Activated CD4-positive, alpha-beta T cell treated with anti-CD3 and anti-CD28 coated beads, Interleukin-2, amount 10 ng/mL, durations not matched to agents 24 days and 14 days (primary cell): ENCODE measurements at regions of chr9 and their contacts with region 1.

Region 1: GRCh38 chr9:123187131-123187530 is 81.3 kb downstream of the STRBP start:
- DNase-seq: no peak
- H3K4me3 Mint-ChIP-seq: no peak overlapping the region
- H3K27ac Mint-ChIP-seq: no peak overlapping the region
- H3K4me1 Mint-ChIP-seq: no peaks in the 10 kb centered on the region
- H3K27me3 Mint-ChIP-seq: no peaks in the 10 kb centered on the region

Region 2: GRCh38 chr9:123150708-123151503 is 36.2 kb before region 1 on chr9:
- intact Hi-C with region 1: loop called (anchors 1 kb)
- DNase-seq: no peak
- H3K4me3 Mint-ChIP-seq: no peak overlapping the region
- H3K27ac Mint-ChIP-seq: no peak overlapping the region
- H3K4me1 Mint-ChIP-seq: no peaks in the 10 kb centered on the region
- H3K27me3 Mint-ChIP-seq: no peaks in the 10 kb centered on the region

Region 3: GRCh38 chr9:123201083-123201482 is 14.0 kb after region 1 on chr9:
- intact Hi-C with region 1: no loop called
- DNase-seq: no peak
- H3K4me3 Mint-ChIP-seq: no peak overlapping the region
- H3K27ac Mint-ChIP-seq: no peak overlapping the region
- H3K4me1 Mint-ChIP-seq: no peaks in the 10 kb centered on the region
- H3K27me3 Mint-ChIP-seq: no peaks in the 10 kb centered on the region